ENCODE measurements at regions of chr2 and their contacts with region 1.

Region 1: DNA sequence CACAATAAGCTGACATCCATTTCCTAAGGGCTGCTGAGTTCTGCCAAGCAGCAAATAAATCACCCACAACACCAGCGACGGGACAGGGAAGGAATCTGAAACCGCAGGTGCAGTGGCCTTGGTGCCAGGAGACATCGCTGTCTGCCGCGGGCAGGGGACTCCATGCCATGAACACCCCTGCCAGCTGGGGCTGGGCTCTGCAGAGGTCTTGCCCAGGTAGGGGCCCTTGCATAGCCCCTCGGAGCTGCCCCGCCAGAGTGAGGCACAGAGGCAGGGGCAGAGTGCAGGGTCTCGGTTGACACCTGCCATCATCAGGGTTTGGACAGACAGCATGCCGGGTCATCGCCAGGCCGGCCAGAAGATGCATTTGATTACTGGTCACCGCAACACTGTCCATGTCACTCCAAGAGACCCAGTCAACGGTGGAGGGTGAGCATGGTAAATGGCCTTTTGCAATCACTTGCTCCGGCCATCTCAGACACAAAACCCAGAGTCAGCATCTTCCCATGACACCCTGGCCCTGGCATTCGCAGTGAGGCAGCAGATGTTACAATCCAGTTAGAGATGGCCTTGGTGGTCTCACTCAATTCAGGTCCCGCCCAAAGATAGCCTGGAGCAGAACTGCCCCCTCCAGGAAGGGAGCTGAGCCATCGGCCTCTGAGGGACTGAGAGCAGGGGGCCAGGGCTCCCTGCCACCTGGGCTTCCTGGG is 255.5 kb downstream of the NDUFA10 start:
- DNase-seq: no peak
- H3K4me3 ChIP-seq: no peak overlapping the region
- H3K27ac ChIP-seq: no peak overlapping the region
- H3K4me1 ChIP-seq: no peaks in the 10 kb centered on the region
- H3K27me3 ChIP-seq: no peaks in the 10 kb centered on the region
- CTCF ChIP-seq: no peak

Region 2: GRCh38 chr2:239444626-239445625 is 324.8 kb before region 1 on chr2:
- CTCF ChIA-PET with region 1: no interaction called
- dilution Hi-C with region 1: no loop called
- in situ Hi-C with region 1: no loop called
- intact Hi-C with region 1: no loop called
- DNase-seq: peak; percentile 39
- H3K4me3 ChIP-seq: no peak overlapping the region
- H3K27ac ChIP-seq: no peak overlapping the region
- H3K4me1 ChIP-seq: peaks cover 10% of the 10 kb centered on the region
- H3K27me3 ChIP-seq: no peaks in the 10 kb centered on the region
- CTCF ChIP-seq: no peak

Region 3: DNA sequence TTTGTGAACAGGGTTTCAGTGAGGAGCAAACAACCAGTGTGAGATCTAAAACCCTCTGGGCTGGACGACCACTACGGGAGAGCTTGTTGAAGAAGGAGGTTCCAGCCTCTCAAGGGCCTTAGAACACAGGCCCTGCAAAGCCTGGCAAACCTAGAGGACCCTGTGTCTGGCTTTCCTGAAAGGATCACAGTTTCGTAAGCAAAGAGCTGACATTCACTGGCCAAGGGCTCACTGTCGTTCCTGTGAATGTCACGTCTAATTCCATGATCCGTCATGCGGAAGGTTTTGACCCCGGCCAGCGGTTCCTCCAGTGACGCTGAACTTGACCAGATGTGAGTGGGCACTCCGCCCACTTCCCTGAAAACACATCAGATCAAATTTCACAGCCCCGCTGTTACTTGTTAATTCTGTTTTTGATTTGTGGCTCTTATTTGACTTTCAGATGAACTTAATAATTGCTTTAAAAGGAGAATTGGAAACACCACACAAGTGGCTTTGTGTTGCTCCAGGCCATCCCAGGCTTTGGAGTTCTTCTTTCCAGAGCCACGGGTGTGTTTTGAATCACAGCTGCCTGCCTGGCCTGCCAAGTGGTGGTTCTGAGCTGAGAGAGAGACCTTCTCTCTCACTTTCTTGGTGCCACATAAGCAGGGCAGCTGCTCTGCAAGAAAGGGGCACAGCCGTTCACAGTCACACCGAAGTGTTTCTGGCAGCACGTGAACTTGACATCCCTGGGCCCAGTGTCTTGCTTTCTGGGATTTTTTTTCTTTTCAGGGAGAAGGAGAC is 53.0 kb before region 1 on chr2:
- CTCF ChIA-PET with region 1: no interaction called
- dilution Hi-C with region 1: no loop called
- in situ Hi-C with region 1: no loop called
- intact Hi-C with region 1: no loop called
- DNase-seq: no peak
- H3K4me3 ChIP-seq: no peak overlapping the region
- H3K27ac ChIP-seq: no peak overlapping the region
- H3K4me1 ChIP-seq: no peaks in the 10 kb centered on the region
- H3K27me3 ChIP-seq: no peaks in the 10 kb centered on the region
- CTCF ChIP-seq: no peak

Region 4: GRCh38 chr2:239728211-239728600 is 41.5 kb before region 1 on chr2:
- CTCF ChIA-PET with region 1: no interaction called
- dilution Hi-C with region 1: loop called (anchors 5 kb)
- in situ Hi-C with region 1: no loop called
- intact Hi-C with region 1: no loop called
- DNase-seq: no peak
- H3K4me3 ChIP-seq: no peak overlapping the region
- H3K27ac ChIP-seq: no peak overlapping the region
- H3K4me1 ChIP-seq: no peaks in the 10 kb centered on the region
- H3K27me3 ChIP-seq: no peaks in the 10 kb centered on the region
- CTCF ChIP-seq: no peak

Region 5: GRCh38 chr2:239790313-239790712 is 20.6 kb after region 1 on chr2:
- CTCF ChIA-PET with region 1: no interaction called
- dilution Hi-C with region 1: no loop called
- in situ Hi-C with region 1: no loop called
- intact Hi-C with region 1: no loop called
- DNase-seq: no peak
- H3K4me3 ChIP-seq: no peak overlapping the region
- H3K27ac ChIP-seq: no peak overlapping the region
- H3K4me1 ChIP-seq: no peaks in the 10 kb centered on the region
- H3K27me3 ChIP-seq: no peaks in the 10 kb centered on the region
- CTCF ChIP-seq: no peak

Region 6: GRCh38 chr2:241329669-241330615 is 1560.3 kb after region 1 on chr2:
- CTCF ChIA-PET with region 1: no interaction called
- dilution Hi-C with region 1: no loop called
- in situ Hi-C with region 1: no loop called
- intact Hi-C with region 1: no loop called
- DNase-seq: peak; percentile 58
- H3K4me3 ChIP-seq: peak overlapping the region in 1 of 3 experiments; percentile 23
- H3K27ac ChIP-seq: peak overlapping the region; percentile 37
- H3K4me1 ChIP-seq: peaks cover 21% of the 10 kb centered on the region
- H3K27me3 ChIP-seq: no peaks in the 10 kb centered on the region
- CTCF ChIP-seq: no peak